CD4-positive, alpha-beta memory T cell (primary cell): ENCODE measurements at regions of chr11 and their contacts with region 1.

Region 1: GRCh38 chr11:65111744-65112414 is at the start of gene TM7SF2:
- DNase-seq: peak; percentile 91 to 96 (median 93)
- H3K4me3 ChIP-seq: peak within 1 kb of the TSS; percentile 36 to 66
- H3K4me3 Mint-ChIP-seq: peak within 1 kb of the TSS; percentile 88 to 96 (median 88)
- H3K27ac ChIP-seq: peak within 1 kb of the TSS; percentile 59
- H3K27ac Mint-ChIP-seq: peak within 1 kb of the TSS; percentile 90 to 96 (median 91)
- H3K4me1 ChIP-seq: peaks cover 45% of the 10 kb centered on the region
- H3K4me1 Mint-ChIP-seq: peaks cover 14 to 52% (median 39%) of the 10 kb centered on the region in 4 donors
- H3K27me3 ChIP-seq: no peaks in the 10 kb centered on the region
- H3K27me3 Mint-ChIP-seq: no peaks in the 10 kb centered on the region
- total RNA-seq, gene TM7SF2: 22.4 to 27.2 TPM

Region 2: GRCh38 chr11:64924102-64924851 is 187.6 kb before region 1 on chr11 and contains the start of gene PPP2R5B:
- CTCF ChIA-PET with region 1: no interaction called
- POLR2A ChIA-PET with region 1: interaction called, 3 read pairs
- intact Hi-C with region 1: loop called (anchors 2 kb)
- DNase-seq: peak; percentile 87 to 95 (median 90)
- H3K4me3 ChIP-seq: peak within 1 kb of the TSS; percentile 61 to 85
- H3K4me3 Mint-ChIP-seq: peak within 1 kb of the TSS; percentile 93 to 99 (median 96)
- H3K27ac ChIP-seq: peak within 1 kb of the TSS; percentile 78
- H3K27ac Mint-ChIP-seq: peak within 1 kb of the TSS; percentile 98 to 100 (median 99)
- H3K4me1 ChIP-seq: peaks cover 20% of the 10 kb centered on the region
- H3K4me1 Mint-ChIP-seq: peaks cover 9 to 15% (median 11%) of the 10 kb centered on the region in 4 donors
- H3K27me3 ChIP-seq: no peaks in the 10 kb centered on the region
- H3K27me3 Mint-ChIP-seq: no peaks in the 10 kb centered on the region
- total RNA-seq, gene PPP2R5B: 14.0 to 15.8 TPM

Region 3: DNA sequence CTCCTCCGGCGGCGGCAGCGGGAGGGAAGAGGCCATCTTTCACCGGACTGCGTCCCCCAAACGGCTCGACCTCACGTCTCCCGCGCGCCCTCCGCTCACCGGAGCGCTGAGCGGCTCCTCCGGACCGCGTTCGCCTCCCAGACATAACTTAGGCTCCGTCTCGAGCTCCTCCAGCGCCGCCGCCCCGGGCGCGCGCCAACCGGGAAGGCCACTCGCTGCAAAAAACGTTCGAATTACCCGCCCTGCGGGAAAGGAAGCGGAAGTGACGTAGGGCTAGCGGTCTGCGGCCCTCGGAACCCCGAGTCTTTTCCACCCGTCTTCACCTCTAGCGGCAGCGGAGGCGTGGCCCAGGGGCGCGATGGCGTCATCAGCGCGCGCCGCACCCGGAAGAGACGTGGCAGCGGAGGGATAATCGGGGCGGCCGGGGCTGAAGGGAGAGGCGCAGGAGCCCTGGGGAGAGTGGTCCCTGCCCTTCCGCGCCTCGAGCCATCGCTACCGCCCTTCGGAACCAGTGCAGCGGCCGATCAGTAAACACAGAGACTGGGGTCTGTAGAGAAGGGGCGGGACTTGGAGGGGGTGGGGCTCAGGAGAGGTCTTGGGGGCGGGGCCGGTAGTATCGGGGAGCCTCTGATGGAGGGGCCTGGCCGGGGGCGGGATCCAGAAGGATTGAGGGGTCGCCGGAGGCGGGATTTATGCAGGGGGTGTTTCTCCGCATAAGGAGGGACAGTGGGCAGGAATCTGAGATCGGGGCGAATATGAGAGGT is 27.9 kb before region 1 on chr11 and contains the starts of genes CDCA5 and ZFPL1:
- CTCF ChIA-PET with region 1: interaction called, 5 read pairs
- POLR2A ChIA-PET with region 1: interaction called, 320 read pairs
- intact Hi-C with region 1: loop called (anchors 1 kb)
- DNase-seq: peak; percentile 94 to 98 (median 97)
- H3K4me3 ChIP-seq: peak within 1 kb of the TSS; percentile 74 to 75
- H3K4me3 Mint-ChIP-seq: peak within 1 kb of the TSS; percentile 92 to 96 (median 94)
- H3K27ac ChIP-seq: peak within 1 kb of the TSS; percentile 94
- H3K27ac Mint-ChIP-seq: peak within 1 kb of the TSS; percentile 97 to 99 (median 98)
- H3K4me1 ChIP-seq: peaks cover 25% of the 10 kb centered on the region
- H3K4me1 Mint-ChIP-seq: peaks cover 9 to 42% (median 26%) of the 10 kb centered on the region in 4 donors
- H3K27me3 ChIP-seq: no peaks in the 10 kb centered on the region
- H3K27me3 Mint-ChIP-seq: no peaks in the 10 kb centered on the region
- total RNA-seq, gene CDCA5: 0.41 to 0.64 TPM
- total RNA-seq, gene ZFPL1: 48.6 to 51.9 TPM

Region 4: DNA sequence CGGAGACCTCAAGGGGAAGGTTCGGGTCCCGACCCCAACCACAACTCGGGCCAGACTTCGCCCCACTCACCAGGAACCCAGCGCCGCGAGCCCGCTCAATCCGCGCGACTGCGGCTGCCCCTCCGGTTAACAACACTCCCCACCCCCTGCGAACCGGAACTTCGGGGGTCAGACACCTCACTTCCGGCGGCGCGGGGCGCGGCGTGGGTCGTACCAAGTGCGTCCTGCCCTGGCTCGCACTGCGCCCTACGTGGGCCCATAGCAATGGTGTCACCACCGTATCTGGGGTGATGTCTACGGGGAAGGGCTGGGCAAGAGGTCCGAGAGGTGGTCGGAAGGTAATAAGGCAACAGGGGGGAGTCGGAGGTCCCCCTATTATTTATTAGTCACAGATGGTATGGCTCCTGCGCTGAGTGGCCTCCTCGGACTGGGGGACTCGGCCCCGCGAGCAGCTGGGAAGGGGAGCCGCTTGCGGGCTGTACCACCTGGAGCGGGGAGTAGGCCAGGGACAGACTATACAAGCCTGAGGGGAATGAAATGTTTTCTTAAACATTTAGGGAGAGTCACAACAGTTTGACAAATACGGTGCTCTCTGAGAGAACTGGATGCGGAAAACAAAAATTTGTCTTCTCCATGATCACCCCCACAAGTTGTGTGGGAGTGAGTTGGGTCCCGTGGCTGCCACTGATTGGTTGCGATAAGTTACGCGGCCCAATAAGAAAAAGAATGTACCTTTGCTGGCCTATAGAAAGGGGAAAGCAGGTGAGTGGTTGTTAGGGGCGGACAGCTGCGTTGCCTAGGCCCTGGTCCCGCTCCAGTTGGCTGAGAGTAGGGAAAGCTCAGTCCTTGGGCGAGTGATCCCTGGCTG is 22.7 kb after region 1 on chr11 and contains the start of gene SYVN1:
- CTCF ChIA-PET with region 1: interaction called, 23 read pairs
- POLR2A ChIA-PET with region 1: interaction called, 251 read pairs
- intact Hi-C with region 1: loop called (anchors 1 kb)
- DNase-seq: peak; percentile 92 to 95 (median 94)
- H3K4me3 ChIP-seq: peak within 1 kb of the TSS; percentile 68 to 99
- H3K4me3 Mint-ChIP-seq: peak within 1 kb of the TSS; percentile 97 to 100 (median 98)
- H3K27ac ChIP-seq: peak within 1 kb of the TSS; percentile 99
- H3K27ac Mint-ChIP-seq: peak within 1 kb of the TSS; percentile 99 to 100 (median 100)
- H3K4me1 ChIP-seq: peaks cover 30% of the 10 kb centered on the region
- H3K4me1 Mint-ChIP-seq: peaks cover 23 to 48% (median 33%) of the 10 kb centered on the region in 4 donors
- H3K27me3 ChIP-seq: no peaks in the 10 kb centered on the region
- H3K27me3 Mint-ChIP-seq: no peaks in the 10 kb centered on the region
- total RNA-seq, gene SYVN1: 74.0 to 76.5 TPM

Region 5: GRCh38 chr11:65159012-65159411 is 47.1 kb after region 1 on chr11:
- CTCF ChIA-PET with region 1: no interaction called
- POLR2A ChIA-PET with region 1: no interaction called
- intact Hi-C with region 1: no loop called
- DNase-seq: no peak
- H3K4me3 ChIP-seq: no peak overlapping the region
- H3K4me3 Mint-ChIP-seq: no peak overlapping the region
- H3K27ac ChIP-seq: no peak overlapping the region
- H3K27ac Mint-ChIP-seq: no peak overlapping the region
- H3K4me1 ChIP-seq: no peaks in the 10 kb centered on the region
- H3K4me1 Mint-ChIP-seq: no peaks in the 10 kb centered on the region
- H3K27me3 ChIP-seq: no peaks in the 10 kb centered on the region
- H3K27me3 Mint-ChIP-seq: peaks cover 0 to 4% of the 10 kb centered on the region in 2 donors

Region 6: GRCh38 chr11:65274735-65275682 is 163.1 kb after region 1 on chr11:
- CTCF ChIA-PET with region 1: no interaction called
- POLR2A ChIA-PET with region 1: no interaction called
- intact Hi-C with region 1: no loop called
- DNase-seq: peak; percentile 19 to 39 (median 29)
- H3K4me3 ChIP-seq: no peak overlapping the region
- H3K4me3 Mint-ChIP-seq: no peak overlapping the region
- H3K27ac ChIP-seq: no peak overlapping the region
- H3K27ac Mint-ChIP-seq: peak overlapping the region in 2 of 7 donors; percentile 5 to 11
- H3K4me1 ChIP-seq: peaks cover 8% of the 10 kb centered on the region
- H3K4me1 Mint-ChIP-seq: peaks cover 6 to 12% (median 9%) of the 10 kb centered on the region in 4 donors
- H3K27me3 ChIP-seq: no peaks in the 10 kb centered on the region
- H3K27me3 Mint-ChIP-seq: no peaks in the 10 kb centered on the region

Region 7: DNA sequence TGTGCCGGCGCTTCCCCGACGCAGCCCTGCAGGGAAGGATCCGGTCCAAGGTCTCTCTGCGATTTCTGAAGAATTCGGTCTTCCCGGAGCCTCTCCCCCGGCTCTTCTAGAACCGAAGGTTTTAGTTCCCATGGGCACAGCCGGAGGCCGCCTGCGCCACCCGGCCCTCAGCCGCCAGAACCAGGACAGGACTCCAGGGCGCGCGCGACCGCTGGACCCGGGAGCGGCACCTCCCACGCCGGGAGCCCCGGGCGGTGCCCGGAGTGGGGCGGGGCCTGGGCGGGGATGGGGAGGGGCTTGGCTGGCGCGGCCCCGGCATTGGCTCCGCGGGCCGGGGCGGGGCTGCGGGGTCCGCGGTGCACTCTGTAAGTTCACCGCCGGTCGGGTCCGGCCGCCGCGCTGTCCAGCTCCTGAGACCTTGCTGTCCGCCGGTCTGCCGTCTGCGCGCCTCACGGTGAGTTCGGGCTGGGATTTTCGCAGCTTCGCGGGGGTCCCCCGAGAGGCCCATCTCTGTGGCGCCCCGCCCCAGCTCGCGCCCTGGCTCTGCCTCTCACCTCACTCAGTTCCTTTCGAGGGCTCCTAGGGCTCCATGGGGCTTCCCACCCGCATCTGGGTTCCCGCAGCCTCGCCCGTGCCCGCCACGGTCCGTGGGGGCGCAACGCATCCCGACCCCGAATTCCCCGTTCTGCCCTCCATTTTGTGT is 202.8 kb after region 1 on chr11 and contains the start of gene CDC42EP2:
- CTCF ChIA-PET with region 1: interaction called, 5 read pairs
- POLR2A ChIA-PET with region 1: interaction called, 8 read pairs
- intact Hi-C with region 1: loop called (anchors 2 kb)
- DNase-seq: peak; percentile 51 to 71 (median 58)
- H3K4me3 ChIP-seq: peak within 1 kb of the TSS; percentile 73 to 74
- H3K4me3 Mint-ChIP-seq: peak within 1 kb of the TSS; percentile 72 to 83 (median 76)
- H3K27ac ChIP-seq: peak within 1 kb of the TSS; percentile 49
- H3K27ac Mint-ChIP-seq: peak within 1 kb of the TSS in 1 of 7 donors; percentile 44
- H3K4me1 ChIP-seq: peaks cover 15% of the 10 kb centered on the region
- H3K4me1 Mint-ChIP-seq: peaks cover 4 to 14% (median 7%) of the 10 kb centered on the region in 4 donors
- H3K27me3 ChIP-seq: no peaks in the 10 kb centered on the region
- H3K27me3 Mint-ChIP-seq: no peaks in the 10 kb centered on the region
- total RNA-seq, gene CDC42EP2: 0.55 to 0.67 TPM